ENCODE measurements at regions of chrX and their contacts with region 1.

Region 1: GRCh38 chrX:134764212-134764785 is 106.0 kb upstream of the PLAC1 start:
- DNase-seq: peak; percentile 41
- H3K4me3 ChIP-seq: no peak overlapping the region
- H3K27ac ChIP-seq: no peak overlapping the region
- H3K4me1 ChIP-seq: no peaks in the 10 kb centered on the region
- H3K27me3 ChIP-seq: no peaks in the 10 kb centered on the region
- CTCF ChIP-seq: peak in 1 of 2 donors; percentile 13
- POLR2A ChIP-seq: no peak

Region 2: GRCh38 chrX:134727371-134727770 is 36.9 kb before region 1 on chrX:
- CTCF ChIA-PET with region 1: interaction called, 13 read pairs
- POLR2A ChIA-PET with region 1: no interaction called
- dilution Hi-C with region 1: no loop called
- intact Hi-C with region 1: no loop called
- DNase-seq: peak; percentile 34
- H3K4me3 ChIP-seq: no peak overlapping the region
- H3K27ac ChIP-seq: no peak overlapping the region
- H3K4me1 ChIP-seq: no peaks in the 10 kb centered on the region
- H3K27me3 ChIP-seq: no peaks in the 10 kb centered on the region
- CTCF ChIP-seq: peak in 1 of 2 donors; percentile 14
- POLR2A ChIP-seq: no peak

Region 3: GRCh38 chrX:134908356-134908755 is 144.1 kb after region 1 on chrX:
- CTCF ChIA-PET with region 1: no interaction called
- POLR2A ChIA-PET with region 1: no interaction called
- dilution Hi-C with region 1: no loop called
- intact Hi-C with region 1: no loop called
- DNase-seq: peak; percentile 67
- H3K4me3 ChIP-seq: no peak overlapping the region
- H3K27ac ChIP-seq: no peak overlapping the region
- H3K4me1 ChIP-seq: no peaks in the 10 kb centered on the region
- H3K27me3 ChIP-seq: no peaks in the 10 kb centered on the region
- CTCF ChIP-seq: peak in 1 of 2 donors; percentile 25
- POLR2A ChIP-seq: no peak

Measured in endothelial cell of umbilical vein (primary cell).